ENCODE measurements at regions of chr1 and their contacts with region 1.

Region 1: GRCh38 chr1:20521960-20522861 is 14.3 kb upstream of the MUL1 start:
- DNase-seq: peak; percentile 20
- ATAC-seq: peak; percentile 62
- H3K4me3 ChIP-seq: no peak overlapping the region
- H3K27ac ChIP-seq: no peak overlapping the region
- H3K4me1 ChIP-seq: no peaks in the 10 kb centered on the region
- H3K27me3 ChIP-seq: no peaks in the 10 kb centered on the region; a peak in 1 of 4 replicates
- CTCF ChIP-seq: peak; percentile 85 to 89 (median 87)
- EP300 ChIP-seq: no peak
- POLR2A ChIP-seq: no peak
- RAD21 ChIP-seq: peak; percentile 93

Region 2: DNA sequence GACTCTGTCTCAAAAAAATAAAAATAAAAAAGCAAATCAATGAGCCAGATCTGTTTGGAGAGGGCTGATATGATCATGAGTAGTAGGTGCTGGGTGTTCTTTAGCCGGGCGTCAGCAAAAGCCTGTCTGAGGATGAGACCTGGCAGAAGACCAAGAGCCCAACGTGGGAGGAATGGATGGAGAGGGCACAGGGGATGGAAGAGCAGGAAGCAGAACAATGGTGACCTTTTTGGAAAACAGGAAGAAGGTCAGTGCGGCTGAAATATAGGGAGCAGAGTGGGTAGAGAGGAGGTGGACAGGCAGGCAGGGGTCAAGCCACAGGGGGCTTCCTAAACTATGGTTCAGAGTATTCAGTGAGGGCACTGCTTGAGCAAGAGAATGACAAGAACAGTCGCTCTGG is 200.6 kb before region 1 on chr1:
- CTCF ChIA-PET with region 1: no interaction called
- POLR2A ChIA-PET with region 1: no interaction called
- RAD21 ChIA-PET with region 1: no interaction called
- SMC1A ChIA-PET with region 1: no interaction called
- in situ Hi-C with region 1: no loop called
- intact Hi-C with region 1: no loop called
- DNase-seq: no peak
- ATAC-seq: no peak
- H3K4me3 ChIP-seq: no peak overlapping the region
- H3K27ac ChIP-seq: no peak overlapping the region
- H3K4me1 ChIP-seq: peaks cover 24% of the 10 kb centered on the region
- H3K27me3 ChIP-seq: peaks cover 0 to under 1% of the 10 kb centered on the region in 2 experiments; a peak in 1 of 4 replicates
- CTCF ChIP-seq: no peak
- EP300 ChIP-seq: no peak
- POLR2A ChIP-seq: no peak
- RAD21 ChIP-seq: no peak

Region 3: GRCh38 chr1:20640183-20640597 is 118.0 kb after region 1 on chr1:
- CTCF ChIA-PET with region 1: interaction called, 11 read pairs
- POLR2A ChIA-PET with region 1: no interaction called
- RAD21 ChIA-PET with region 1: interaction called, 10 read pairs
- SMC1A ChIA-PET with region 1: interaction called, 3 read pairs
- in situ Hi-C with region 1: loop called (anchors 5 kb)
- intact Hi-C with region 1: loop called (anchors 1 kb)
- DNase-seq: peak; percentile 11
- ATAC-seq: peak; percentile 92
- H3K4me3 ChIP-seq: no peak overlapping the region
- H3K27ac ChIP-seq: no peak overlapping the region
- H3K4me1 ChIP-seq: no peaks in the 10 kb centered on the region
- H3K27me3 ChIP-seq: no peaks in the 10 kb centered on the region
- CTCF ChIP-seq: peak; percentile 73 to 81 (median 77)
- EP300 ChIP-seq: no peak
- POLR2A ChIP-seq: no peak
- RAD21 ChIP-seq: peak; percentile 70

Region 4: GRCh38 chr1:21184276-21184675 is 662.1 kb after region 1 on chr1:
- CTCF ChIA-PET with region 1: no interaction called
- POLR2A ChIA-PET with region 1: no interaction called
- RAD21 ChIA-PET with region 1: no interaction called
- SMC1A ChIA-PET with region 1: no interaction called
- in situ Hi-C with region 1: loop called (anchors 10 kb)
- intact Hi-C with region 1: no loop called
- DNase-seq: no peak
- ATAC-seq: peak; percentile 70
- H3K4me3 ChIP-seq: no peak overlapping the region
- H3K27ac ChIP-seq: no peak overlapping the region
- H3K4me1 ChIP-seq: peaks cover 3% of the 10 kb centered on the region; the same call in 1 of the 2 replicates
- H3K27me3 ChIP-seq: no peaks in the 10 kb centered on the region
- CTCF ChIP-seq: no peak
- EP300 ChIP-seq: no peak
- POLR2A ChIP-seq: no peak
- RAD21 ChIP-seq: no peak

Measured in GM12878 (cell line).